Calu3 (cell line): ENCODE measurements at regions of chr7 and their contacts with region 1.

Region 1: GRCh38 chr7:4479367-4480039 is 202.6 kb upstream of the FOXK1 start:
- DNase-seq: peak; percentile 74
- H3K4me3 Mint-ChIP-seq: no peak overlapping the region
- H3K27ac Mint-ChIP-seq: no peak overlapping the region
- H3K4me1 Mint-ChIP-seq: no peaks in the 10 kb centered on the region
- H3K27me3 Mint-ChIP-seq: peaks cover 46% of the 10 kb centered on the region
- CTCF ChIP-seq: peak; percentile 65

Region 2: GRCh38 chr7:3922175-3922635 is 557.3 kb before region 1 on chr7:
- CTCF ChIA-PET with region 1: interaction called, 3 read pairs
- intact Hi-C with region 1: loop called (anchors 1 kb)
- DNase-seq: peak; percentile 67
- H3K4me3 Mint-ChIP-seq: no peak overlapping the region
- H3K27ac Mint-ChIP-seq: no peak overlapping the region
- H3K4me1 Mint-ChIP-seq: peaks cover 14% of the 10 kb centered on the region
- H3K27me3 Mint-ChIP-seq: no peaks in the 10 kb centered on the region
- CTCF ChIP-seq: peak; percentile 44

Region 3: GRCh38 chr7:4109481-4110110 is 369.9 kb before region 1 on chr7:
- CTCF ChIA-PET with region 1: no interaction called
- intact Hi-C with region 1: loop called (anchors 10 kb)
- DNase-seq: no peak
- H3K4me3 Mint-ChIP-seq: no peak overlapping the region
- H3K27ac Mint-ChIP-seq: no peak overlapping the region
- H3K4me1 Mint-ChIP-seq: no peaks in the 10 kb centered on the region
- H3K27me3 Mint-ChIP-seq: no peaks in the 10 kb centered on the region
- CTCF ChIP-seq: no peak

Region 4: GRCh38 chr7:4416396-4417056 is 63.0 kb before region 1 on chr7:
- CTCF ChIA-PET with region 1: no interaction called
- intact Hi-C with region 1: loop called (anchors 5 kb)
- DNase-seq: peak; percentile 26
- H3K4me3 Mint-ChIP-seq: peak overlapping the region; percentile 63
- H3K27ac Mint-ChIP-seq: no peak overlapping the region
- H3K4me1 Mint-ChIP-seq: peaks cover 13% of the 10 kb centered on the region
- H3K27me3 Mint-ChIP-seq: peaks cover 53% of the 10 kb centered on the region
- CTCF ChIP-seq: no peak